Ovary (tissue), 10 donors: ENCODE measurements at regions of chr9 and their contacts with region 1.

Region 1: DNA sequence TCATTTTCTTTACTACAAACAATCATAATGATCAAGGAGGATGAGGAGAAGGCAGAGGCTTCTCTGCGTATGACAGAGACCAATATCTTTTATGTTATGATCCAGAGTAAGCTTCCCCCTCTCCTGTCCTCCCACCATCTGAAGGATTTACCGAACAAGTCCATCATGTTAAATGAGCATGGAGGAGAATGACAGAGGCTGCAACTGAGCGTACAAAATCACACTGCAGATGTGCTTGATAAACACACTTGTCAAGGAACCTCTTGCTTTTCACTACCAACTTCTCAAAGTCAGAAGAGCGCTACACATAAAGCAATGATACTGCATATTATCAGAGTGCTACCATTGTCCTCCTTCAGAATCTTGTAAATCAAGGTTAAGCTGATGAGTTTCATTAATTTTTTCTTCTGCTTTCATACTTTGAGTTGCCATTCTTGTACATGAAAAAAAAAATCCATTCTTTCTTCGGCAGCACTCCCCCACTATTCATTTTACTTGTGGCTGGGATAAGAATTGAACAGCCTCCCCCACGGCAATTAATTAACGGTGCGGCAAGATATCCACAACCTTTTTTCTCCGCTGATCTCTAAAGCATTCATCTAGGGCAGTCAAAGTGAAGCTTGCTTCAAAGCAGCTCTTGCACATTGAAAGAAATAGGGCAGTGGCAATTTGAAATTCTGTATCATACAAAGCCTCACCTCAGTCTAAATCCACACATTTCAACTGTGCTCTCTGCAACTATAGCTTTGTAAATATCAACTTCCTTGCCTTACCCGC is 673.9 kb upstream of the DMAC1 start:
- DNase-seq: no peak
- H3K4me3 ChIP-seq: no peak overlapping the region
- H3K27ac ChIP-seq: no peak overlapping the region
- H3K4me1 ChIP-seq: no peaks in the 10 kb centered on the region
- H3K27me3 ChIP-seq: no peaks in the 10 kb centered on the region
- CTCF ChIP-seq: no peak
- EP300 ChIP-seq: no peak
- POLR2A ChIP-seq: no peak

Region 2: GRCh38 chr9:8053530-8053929 is 419.9 kb before region 1 on chr9:
- intact Hi-C with region 1: loop called in 1 of 4 experiments (anchors 5 kb)
- DNase-seq: no peak
- H3K4me3 ChIP-seq: no peak overlapping the region
- H3K27ac ChIP-seq: no peak overlapping the region
- H3K4me1 ChIP-seq: no peaks in the 10 kb centered on the region
- H3K27me3 ChIP-seq: no peaks in the 10 kb centered on the region
- CTCF ChIP-seq: no peak
- EP300 ChIP-seq: no peak
- POLR2A ChIP-seq: no peak

Region 3: GRCh38 chr9:8419596-8420275 is 53.7 kb before region 1 on chr9:
- intact Hi-C with region 1: no loop called
- DNase-seq: no peak
- H3K4me3 ChIP-seq: no peak overlapping the region
- H3K27ac ChIP-seq: no peak overlapping the region
- H3K4me1 ChIP-seq: peaks cover 1% of the 10 kb centered on the region
- H3K27me3 ChIP-seq: no peaks in the 10 kb centered on the region
- CTCF ChIP-seq: no peak
- EP300 ChIP-seq: no peak
- POLR2A ChIP-seq: no peak